PC-3 (cell line): ENCODE measurements at regions of chr18 and their contacts with region 1.

Region 1: DNA sequence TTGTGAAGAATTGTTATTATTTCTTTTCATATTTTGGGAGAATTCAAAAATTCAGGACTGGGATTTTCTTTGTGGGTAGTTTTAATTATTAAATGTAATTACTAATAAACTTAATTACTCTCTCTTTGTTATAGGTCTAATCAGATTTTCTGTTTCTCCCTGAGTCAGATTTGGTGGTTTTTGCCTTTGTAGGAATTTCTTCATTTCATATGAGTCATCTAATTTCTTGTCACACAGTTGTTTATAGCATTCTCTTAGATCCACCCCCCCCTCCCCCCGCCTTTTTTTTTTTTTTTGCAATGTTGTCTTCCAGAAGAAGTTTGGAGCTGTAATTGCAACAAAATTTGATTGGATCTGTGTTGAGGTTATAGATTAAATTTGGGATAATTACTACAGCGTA is 26.0 kb upstream of the GALR1 start:
- DNase-seq: peak; percentile 63
- ATAC-seq: peak; percentile 63
- H3K4me3 ChIP-seq: no peak overlapping the region
- H3K27ac ChIP-seq: peak overlapping the region; percentile 35
- H3K4me1 ChIP-seq: peaks cover 16% of the 10 kb centered on the region
- H3K27me3 ChIP-seq: peaks cover 18% of the 10 kb centered on the region; the same call in 1 of the 2 replicates
- CTCF ChIP-seq: no peak

Region 2: DNA sequence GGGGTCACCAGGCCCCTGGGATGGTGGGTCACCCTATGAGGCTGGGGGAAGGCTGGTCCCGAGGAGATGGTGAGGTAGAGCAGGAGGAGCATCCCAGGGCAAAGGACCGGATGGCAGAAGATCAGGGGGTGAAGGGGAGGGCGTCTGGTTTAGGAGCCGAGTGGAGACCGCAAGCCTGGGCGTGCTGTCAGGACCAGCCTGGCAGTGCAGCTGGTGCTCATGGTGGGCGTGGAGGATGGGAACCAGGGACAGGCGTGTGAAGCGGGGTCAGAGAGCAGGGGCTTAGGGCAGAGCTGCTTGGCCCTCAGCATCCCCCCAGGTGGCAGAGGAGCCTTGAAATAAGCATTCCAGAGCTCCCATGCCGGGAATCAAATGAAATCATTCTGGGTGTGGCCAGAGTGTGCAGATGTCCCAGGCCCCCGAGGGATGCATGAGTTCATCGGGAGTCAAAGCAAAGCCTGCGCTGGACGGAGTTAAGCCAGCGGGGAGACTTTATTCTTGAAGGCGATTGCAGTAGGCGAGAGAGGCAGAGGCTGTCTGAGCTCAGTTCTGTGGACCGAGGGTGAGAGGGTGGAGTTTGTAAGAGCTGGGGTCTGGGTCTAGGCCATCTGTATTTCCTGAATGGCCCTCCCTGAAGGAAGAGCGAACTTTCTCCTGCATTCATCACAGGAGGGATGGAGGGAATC is 58.0 kb before region 1 on chr18:
- CTCF ChIA-PET with region 1: no interaction called
- POLR2A ChIA-PET with region 1: no interaction called
- intact Hi-C with region 1: no loop called
- DNase-seq: no peak
- ATAC-seq: no peak
- H3K4me3 ChIP-seq: no peak overlapping the region
- H3K27ac ChIP-seq: no peak overlapping the region
- H3K4me1 ChIP-seq: peaks cover 16% of the 10 kb centered on the region
- H3K27me3 ChIP-seq: no peaks in the 10 kb centered on the region
- CTCF ChIP-seq: no peak

Region 3: DNA sequence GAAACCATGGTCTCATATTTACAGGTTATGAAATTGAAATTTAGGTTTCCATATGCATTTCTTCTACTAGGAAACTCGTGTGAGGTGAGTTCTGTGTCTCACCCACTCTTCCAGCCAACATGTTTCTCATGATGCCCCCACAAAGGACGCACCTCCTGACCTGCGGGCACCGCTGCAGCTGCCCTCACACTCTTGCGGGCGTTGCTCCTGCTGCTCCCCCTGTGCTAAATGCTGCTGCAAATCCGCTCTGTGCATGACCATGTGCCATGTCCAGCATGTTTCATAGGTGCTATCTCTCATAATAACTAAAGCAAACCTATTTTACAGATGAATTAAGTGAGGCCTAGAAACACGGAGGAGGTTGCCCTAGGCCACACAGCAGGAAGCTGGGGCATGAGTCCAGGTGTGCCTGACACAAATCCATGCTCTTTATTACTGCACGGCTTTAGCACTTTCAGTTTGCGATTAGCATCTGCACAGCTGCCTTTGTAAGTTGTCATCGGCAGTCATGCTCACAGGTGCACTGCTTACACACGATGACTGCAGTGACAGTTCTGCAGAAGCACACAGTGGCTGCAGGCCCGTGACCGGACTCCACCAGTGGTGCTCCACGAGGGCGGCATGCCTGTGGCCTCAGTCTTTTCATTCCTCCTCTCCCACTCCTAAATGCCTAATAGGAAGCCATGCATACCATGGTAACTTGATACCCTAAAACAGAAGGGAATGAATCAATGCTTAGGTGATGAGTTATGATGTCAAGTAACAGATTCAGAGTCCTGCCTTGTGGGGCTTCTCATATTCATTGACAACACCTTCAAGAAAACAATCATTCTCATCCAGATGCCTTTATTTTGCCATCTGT is 11.1 kb after region 1 on chr18:
- CTCF ChIA-PET with region 1: no interaction called
- POLR2A ChIA-PET with region 1: no interaction called
- intact Hi-C with region 1: no loop called
- DNase-seq: no peak
- ATAC-seq: no peak
- H3K4me3 ChIP-seq: no peak overlapping the region
- H3K27ac ChIP-seq: no peak overlapping the region
- H3K4me1 ChIP-seq: no peaks in the 10 kb centered on the region
- H3K27me3 ChIP-seq: peaks cover 17% of the 10 kb centered on the region
- CTCF ChIP-seq: no peak

Region 4: DNA sequence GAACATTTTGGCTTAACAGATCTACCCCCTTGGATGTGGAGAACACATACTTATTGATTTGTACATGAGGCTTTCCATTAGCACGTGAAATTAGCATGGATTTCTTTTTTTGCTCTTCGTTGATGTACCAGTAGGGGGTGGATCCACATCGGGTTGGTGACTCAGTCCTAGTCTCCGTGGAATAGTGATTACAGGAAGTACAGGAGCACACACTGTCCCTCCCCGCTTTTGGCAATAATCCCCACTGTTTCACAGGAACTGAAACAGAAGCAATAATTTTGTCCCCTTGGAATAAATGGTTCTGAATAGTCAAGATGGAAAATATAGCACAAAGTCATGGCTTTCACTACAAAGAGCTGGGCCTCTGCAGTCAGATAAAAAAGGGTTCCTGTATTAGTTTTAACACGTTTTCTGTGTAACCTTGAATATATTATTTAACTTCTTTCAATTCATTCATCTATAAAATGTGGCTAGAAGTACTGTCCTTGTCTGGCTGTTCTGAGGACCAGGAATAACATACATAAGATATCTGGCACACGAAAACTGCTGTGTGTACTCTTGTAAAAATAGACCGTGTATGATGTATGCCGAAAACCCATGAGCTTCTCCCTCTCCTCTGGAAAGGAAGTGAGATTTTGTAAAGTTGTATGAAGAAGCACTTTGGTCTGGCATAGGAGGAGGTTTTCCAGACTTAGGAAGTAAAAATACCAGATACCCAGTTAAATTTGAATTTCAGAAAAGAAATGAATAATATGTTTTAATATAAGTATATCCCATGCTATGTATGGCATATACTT is 255.2 kb after region 1 on chr18:
- CTCF ChIA-PET with region 1: no interaction called
- POLR2A ChIA-PET with region 1: interaction called, 22 read pairs
- intact Hi-C with region 1: no loop called
- DNase-seq: peak; percentile 26
- ATAC-seq: no peak
- H3K4me3 ChIP-seq: no peak overlapping the region
- H3K27ac ChIP-seq: no peak overlapping the region
- H3K4me1 ChIP-seq: no peaks in the 10 kb centered on the region
- H3K27me3 ChIP-seq: peaks cover 24% of the 10 kb centered on the region; the same call in 1 of the 2 replicates
- CTCF ChIP-seq: 0 out of 2 replicates have a peak, but pooled peaks have one; percentile 22